ENCODE measurements at regions of chr6 and their contacts with region 1.

Region 1: DNA sequence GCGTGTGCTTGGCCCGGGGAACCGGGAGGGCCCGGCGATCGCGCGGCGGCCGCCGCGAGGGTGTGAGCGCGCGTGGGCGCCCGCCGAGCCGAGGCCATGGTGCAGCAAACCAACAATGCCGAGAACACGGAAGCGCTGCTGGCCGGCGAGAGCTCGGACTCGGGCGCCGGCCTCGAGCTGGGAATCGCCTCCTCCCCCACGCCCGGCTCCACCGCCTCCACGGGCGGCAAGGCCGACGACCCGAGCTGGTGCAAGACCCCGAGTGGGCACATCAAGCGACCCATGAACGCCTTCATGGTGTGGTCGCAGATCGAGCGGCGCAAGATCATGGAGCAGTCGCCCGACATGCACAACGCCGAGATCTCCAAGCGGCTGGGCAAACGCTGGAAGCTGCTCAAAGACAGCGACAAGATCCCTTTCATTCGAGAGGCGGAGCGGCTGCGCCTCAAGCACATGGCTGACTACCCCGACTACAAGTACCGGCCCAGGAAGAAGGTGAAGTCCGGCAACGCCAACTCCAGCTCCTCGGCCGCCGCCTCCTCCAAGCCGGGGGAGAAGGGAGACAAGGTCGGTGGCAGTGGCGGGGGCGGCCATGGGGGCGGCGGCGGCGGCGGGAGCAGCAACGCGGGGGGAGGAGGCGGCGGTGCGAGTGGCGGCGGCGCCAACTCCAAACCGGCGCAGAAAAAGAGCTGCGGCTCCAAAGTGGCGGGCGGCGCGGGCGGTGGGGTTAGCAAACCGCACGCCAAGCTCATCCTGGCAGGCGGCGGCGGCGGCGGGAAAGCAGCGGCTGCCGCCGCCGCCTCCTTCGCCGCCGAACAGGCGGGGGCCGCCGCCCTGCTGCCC is 1.1 kb downstream of the SOX4 start:
- DNase-seq: no peak
- H3K4me3 ChIP-seq: peak overlapping the region; percentile 64
- H3K27me3 ChIP-seq: no peaks in the 10 kb centered on the region
- CTCF ChIP-seq: no peak

Region 2: GRCh38 chr6:20811109-20811746 is 783.4 kb before region 1 on chr6:
- CTCF ChIA-PET with region 1: no interaction called
- POLR2A ChIA-PET with region 1: interaction called, 17 read pairs
- DNase-seq: peak; percentile 96
- H3K4me3 ChIP-seq: no peak overlapping the region
- H3K27me3 ChIP-seq: no peaks in the 10 kb centered on the region
- CTCF ChIP-seq: no peak

Region 3: GRCh38 chr6:20846602-20847028 is 748.0 kb before region 1 on chr6:
- CTCF ChIA-PET with region 1: no interaction called
- POLR2A ChIA-PET with region 1: interaction called, 14 read pairs
- DNase-seq: no peak
- H3K4me3 ChIP-seq: no peak overlapping the region
- H3K27me3 ChIP-seq: no peaks in the 10 kb centered on the region
- CTCF ChIP-seq: no peak

Region 4: DNA sequence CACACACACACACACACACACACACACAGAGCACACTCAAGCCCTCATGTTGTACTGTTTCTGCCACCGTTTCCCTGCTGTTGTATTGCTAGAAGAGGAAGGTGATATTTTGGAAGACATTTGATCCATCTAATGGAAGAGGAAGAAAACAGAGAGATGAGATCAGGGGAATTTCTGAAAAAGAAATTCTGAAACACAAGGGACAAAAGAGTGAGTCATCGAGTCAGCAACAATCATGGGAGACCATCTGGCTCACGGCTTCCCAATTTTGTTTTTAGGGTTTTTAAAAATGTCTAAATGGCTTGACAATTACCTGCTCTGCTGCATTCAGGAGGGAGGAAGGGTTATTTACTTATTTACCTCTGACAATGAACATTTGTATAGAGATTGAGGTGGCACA is 20.8 kb after region 1 on chr6:
- CTCF ChIA-PET with region 1: no interaction called
- POLR2A ChIA-PET with region 1: no interaction called
- DNase-seq: no peak
- H3K4me3 ChIP-seq: no peak overlapping the region
- H3K27me3 ChIP-seq: no peaks in the 10 kb centered on the region
- CTCF ChIP-seq: no peak

Region 5: DNA sequence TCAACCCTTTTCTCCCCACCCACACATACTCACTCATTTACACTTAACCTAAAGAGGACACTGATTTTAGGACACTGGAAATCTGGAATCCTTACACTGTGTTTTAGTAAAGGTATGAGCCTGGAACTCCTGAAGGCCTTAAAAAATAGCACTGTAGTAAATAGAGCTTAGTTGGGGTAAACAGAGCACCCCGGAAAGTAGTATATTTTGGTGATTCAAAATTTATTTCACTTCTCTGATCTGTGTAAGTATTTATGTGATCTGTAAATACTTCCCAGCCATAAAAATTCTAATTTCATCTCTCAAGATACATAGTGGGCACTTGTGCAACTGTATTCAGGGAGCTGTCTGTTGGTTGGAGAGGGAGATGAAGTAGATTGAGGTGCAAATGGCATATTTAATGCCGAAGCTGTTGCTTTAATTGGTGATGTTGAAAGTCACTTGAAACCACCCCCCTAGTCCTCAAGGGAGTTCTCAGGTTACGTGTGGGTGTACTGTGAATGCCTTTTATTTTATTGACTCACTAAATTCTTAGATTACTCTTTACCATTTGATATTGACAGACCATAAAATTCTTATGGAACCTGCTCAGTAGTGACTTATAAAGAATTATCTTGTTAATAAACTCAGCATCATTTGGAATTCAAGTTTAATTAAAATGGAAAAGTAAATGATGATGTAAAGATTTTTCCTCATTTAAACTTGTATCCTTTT is 153.8 kb after region 1 on chr6:
- CTCF ChIA-PET with region 1: no interaction called
- POLR2A ChIA-PET with region 1: no interaction called
- DNase-seq: no peak
- H3K4me3 ChIP-seq: no peak overlapping the region
- H3K27me3 ChIP-seq: no peaks in the 10 kb centered on the region
- CTCF ChIP-seq: no peak